MCF 10A (cell line): ENCODE measurements at regions of chr13 and their contacts with region 1.

Region 1: GRCh38 chr13:67416047-67416925 is 186.2 kb upstream of the PCDH9 start:
- DNase-seq: peak; percentile 68
- H3K4me3 Mint-ChIP-seq: no peak overlapping the region
- H3K27ac Mint-ChIP-seq: peak overlapping the region; percentile 73
- H3K4me1 Mint-ChIP-seq: peaks cover 22% of the 10 kb centered on the region
- H3K27me3 Mint-ChIP-seq: no peaks in the 10 kb centered on the region
- CTCF ChIP-seq: peak; percentile 71

Region 2: DNA sequence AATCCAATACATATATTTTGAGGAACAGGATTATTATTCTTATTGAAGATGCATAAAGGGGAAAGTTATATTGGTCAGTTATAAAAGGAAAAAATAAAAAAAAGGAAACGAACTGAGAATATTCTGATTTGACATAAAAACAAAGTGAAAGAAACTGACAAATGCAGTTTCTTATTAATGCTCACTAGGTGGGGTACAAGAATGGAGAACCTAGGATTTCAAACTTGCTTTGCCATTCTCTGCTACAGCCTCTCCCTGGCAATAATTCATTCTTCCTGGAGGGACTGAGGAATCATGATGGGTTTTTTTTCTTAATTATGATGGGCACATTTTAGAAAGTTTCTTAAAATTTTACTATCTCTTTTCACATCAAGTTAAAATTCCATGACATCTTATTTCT is 341.0 kb before region 1 on chr13:
- CTCF ChIA-PET with region 1: interaction called, 3 read pairs
- POLR2A ChIA-PET with region 1: no interaction called
- intact Hi-C with region 1: loop called (anchors 10 kb)
- DNase-seq: peak; percentile 17
- H3K4me3 Mint-ChIP-seq: no peak overlapping the region
- H3K27ac Mint-ChIP-seq: no peak overlapping the region
- H3K4me1 Mint-ChIP-seq: no peaks in the 10 kb centered on the region
- H3K27me3 Mint-ChIP-seq: no peaks in the 10 kb centered on the region
- CTCF ChIP-seq: peak; percentile 20

Region 3: DNA sequence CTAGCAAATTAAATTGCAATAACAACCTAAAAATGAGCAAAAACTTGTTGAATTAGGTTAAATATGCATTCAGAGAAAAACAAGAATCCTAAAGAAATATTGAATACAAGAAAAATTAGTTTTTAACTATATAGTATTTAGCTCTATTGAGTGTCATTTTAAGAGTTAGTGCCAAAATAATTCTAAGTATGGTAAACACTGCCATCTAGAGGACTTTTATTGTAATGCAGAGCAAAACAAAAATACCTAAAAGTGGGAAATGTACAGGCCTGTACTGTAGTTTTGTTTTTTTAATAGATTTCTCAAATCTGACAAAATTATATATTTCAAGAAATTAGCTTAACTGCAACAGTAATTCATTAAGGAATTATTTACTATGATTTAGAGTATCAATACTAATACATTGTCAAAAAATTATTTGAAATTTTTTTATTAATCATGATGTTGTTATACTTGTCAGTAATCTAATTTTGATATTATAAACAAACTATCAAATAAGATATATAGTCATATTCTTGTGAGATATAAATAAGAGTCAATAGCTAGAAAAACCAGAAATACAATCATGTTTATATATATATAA is 177.9 kb before region 1 on chr13:
- CTCF ChIA-PET with region 1: interaction called, 19 read pairs
- POLR2A ChIA-PET with region 1: no interaction called
- intact Hi-C with region 1: no loop called
- DNase-seq: peak; percentile 46
- H3K4me3 Mint-ChIP-seq: no peak overlapping the region
- H3K27ac Mint-ChIP-seq: no peak overlapping the region
- H3K4me1 Mint-ChIP-seq: peaks cover 5% of the 10 kb centered on the region
- H3K27me3 Mint-ChIP-seq: no peaks in the 10 kb centered on the region
- CTCF ChIP-seq: peak; percentile 53